ENCODE measurements at regions of chr5 and their contacts with region 1.

Region 1: GRCh38 chr5:31581498-31582099 is 49.5 kb downstream of the C5orf22 start:
- DNase-seq: peak in 2 of 4 donors; percentile 26 to 62
- ATAC-seq: peak; percentile 74
- H3K4me3 ChIP-seq: no peak overlapping the region
- H3K27ac ChIP-seq: no peak overlapping the region
- H3K4me1 ChIP-seq: no peaks in the 10 kb centered on the region
- H3K27me3 ChIP-seq: no peaks in the 10 kb centered on the region
- CTCF ChIP-seq: peak; percentile 36 to 55

Region 2: DNA sequence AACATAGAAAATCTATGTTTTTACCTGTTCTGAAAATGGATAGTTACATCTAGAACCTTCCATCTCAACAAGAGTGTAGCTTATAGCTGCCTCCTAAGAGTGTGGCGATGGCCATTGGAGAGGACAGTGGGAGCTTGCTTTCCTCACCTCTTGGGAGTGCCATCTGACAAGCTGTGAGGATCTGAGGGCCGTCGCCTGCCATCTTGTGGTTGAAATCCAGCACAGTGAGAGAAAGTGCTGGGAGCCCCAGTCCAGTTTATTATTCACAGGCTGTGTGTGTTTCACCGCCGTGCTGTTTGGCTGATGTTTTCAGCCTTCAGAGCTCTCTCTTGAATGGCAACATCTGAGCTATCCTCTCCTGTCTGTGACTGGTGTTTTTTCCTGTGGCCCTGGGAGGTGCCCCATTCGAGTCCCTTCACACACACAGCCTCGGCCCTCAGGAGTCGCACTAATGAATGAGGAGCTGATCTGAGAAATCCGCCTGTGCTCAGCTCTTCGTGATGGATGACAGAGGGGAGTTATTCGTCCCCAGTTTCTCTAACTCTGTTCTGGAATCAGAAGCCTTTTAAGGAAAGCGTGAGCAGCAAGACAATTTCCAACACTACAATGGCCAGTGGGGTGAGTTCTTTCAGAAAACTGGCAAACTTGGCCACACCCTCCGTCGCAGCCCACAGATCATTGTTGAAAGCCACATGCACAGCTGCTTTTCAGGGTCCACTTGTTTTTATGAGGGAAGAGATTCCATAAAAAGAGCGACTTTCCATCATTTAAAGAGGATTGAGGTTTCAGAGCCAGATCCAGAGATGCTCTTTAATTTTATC is 227.7 kb after region 1 on chr5:
- intact Hi-C with region 1: loop called in 1 of 2 experiments (anchors 5 kb)
- DNase-seq: peak in 3 of 4 donors; percentile 53 to 78 (median 54)
- ATAC-seq: peak; percentile 95
- H3K4me3 ChIP-seq: no peak overlapping the region
- H3K27ac ChIP-seq: no peak overlapping the region
- H3K4me1 ChIP-seq: no peaks in the 10 kb centered on the region
- H3K27me3 ChIP-seq: no peaks in the 10 kb centered on the region
- CTCF ChIP-seq: peak; percentile 65 to 67